Sigmoid colon (tissue), 7 donors: ENCODE measurements at regions of chr3 and their contacts with region 1.

Region 1: DNA sequence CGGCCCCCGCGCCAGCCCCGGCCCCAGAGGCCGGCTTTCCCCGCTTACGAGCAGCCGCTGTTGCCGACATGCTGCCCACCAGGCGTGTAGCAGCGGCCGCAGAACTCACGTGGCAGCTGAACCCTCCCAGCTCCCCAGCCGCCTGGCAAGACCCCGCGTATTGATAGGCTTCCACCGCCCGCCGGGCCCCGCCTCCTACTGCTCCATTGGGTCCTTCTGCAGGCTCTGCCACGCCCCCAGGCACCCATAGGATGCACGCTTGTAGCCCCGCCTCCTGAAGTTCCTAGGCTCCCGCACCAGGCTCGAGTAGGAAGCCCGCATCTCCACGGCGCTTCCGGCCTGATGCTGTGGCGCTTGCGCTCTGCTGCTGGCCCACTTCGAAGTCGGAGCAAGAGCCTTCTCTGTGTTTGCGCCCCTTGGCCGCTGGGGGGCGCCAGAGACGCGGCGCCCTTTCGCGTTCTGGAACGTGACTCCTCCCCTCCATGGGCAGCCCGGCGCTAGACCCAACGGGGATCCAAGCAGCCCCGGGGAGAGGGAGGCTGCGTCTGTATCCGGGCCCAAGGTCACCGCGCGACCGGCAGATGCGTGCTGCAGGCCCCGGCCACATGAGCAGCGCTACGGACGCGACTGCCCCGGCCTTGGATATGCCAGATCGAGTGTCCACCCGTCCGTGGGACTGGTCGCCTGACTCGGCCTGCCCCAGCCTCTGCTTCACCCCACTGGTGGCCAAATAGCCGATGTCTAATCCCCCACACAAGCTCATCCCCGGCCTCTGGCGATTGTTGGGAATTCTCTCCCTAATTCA is at the starts of genes PARP3 and RRP9:
- DNase-seq: peak; percentile 100
- H3K4me3 ChIP-seq: peak within 1 kb of the TSS; percentile 61 to 87 (median 75)
- H3K27ac ChIP-seq: peak within 1 kb of the TSS; percentile 89 to 97 (median 96)
- H3K4me1 ChIP-seq: peaks cover 0 to 37% (median 33%) of the 10 kb centered on the region in 4 donors
- H3K27me3 ChIP-seq: no peaks in the 10 kb centered on the region
- CTCF ChIP-seq: peak; percentile 97 to 100 (median 98)
- EP300 ChIP-seq: no peak
- POLR2A ChIP-seq: peak; percentile 63 to 68
- total RNA-seq, gene PARP3: 22.4 to 35.8 (median 26.7) TPM
- total RNA-seq, gene RRP9: 6.4 to 13.3 (median 12.4) TPM

Region 2: GRCh38 chr3:51967384-51968169 is 25.6 kb after region 1 on chr3 and contains the start of gene PCBP4:
- intact Hi-C with region 1: loop called (anchors 1 kb)
- DNase-seq: peak; percentile 85
- H3K4me3 ChIP-seq: peak within 1 kb of the TSS; percentile 66 to 95 (median 80)
- H3K27ac ChIP-seq: peak within 1 kb of the TSS; percentile 92 to 99 (median 94)
- H3K4me1 ChIP-seq: peaks cover 0 to 53% (median 43%) of the 10 kb centered on the region in 4 donors
- H3K27me3 ChIP-seq: no peaks in the 10 kb centered on the region
- CTCF ChIP-seq: no peak
- EP300 ChIP-seq: no peak
- POLR2A ChIP-seq: no peak
- total RNA-seq, gene PCBP4: 256 to 292 (median 268) TPM

Region 3: GRCh38 chr3:51995346-51996163 is 53.6 kb after region 1 on chr3 and contains the start of gene RPL29:
- intact Hi-C with region 1: loop called (anchors 1 kb)
- DNase-seq: peak; percentile 97
- H3K4me3 ChIP-seq: peak within 1 kb of the TSS; percentile 60 to 73 (median 64)
- H3K27ac ChIP-seq: peak within 1 kb of the TSS; percentile 82 to 85 (median 84)
- H3K4me1 ChIP-seq: peaks cover 0 to 19% (median 16%) of the 10 kb centered on the region in 4 donors
- H3K27me3 ChIP-seq: peaks cover 0 to 12% (median 0%) of the 10 kb centered on the region in 3 donors
- CTCF ChIP-seq: peak in 1 of 4 experiments; percentile 7
- EP300 ChIP-seq: peak in 1 of 4 donors; percentile 30
- POLR2A ChIP-seq: peak; percentile 48 to 61
- total RNA-seq, gene RPL29: 1,247 to 2,632 (median 2,024) TPM

Region 4: DNA sequence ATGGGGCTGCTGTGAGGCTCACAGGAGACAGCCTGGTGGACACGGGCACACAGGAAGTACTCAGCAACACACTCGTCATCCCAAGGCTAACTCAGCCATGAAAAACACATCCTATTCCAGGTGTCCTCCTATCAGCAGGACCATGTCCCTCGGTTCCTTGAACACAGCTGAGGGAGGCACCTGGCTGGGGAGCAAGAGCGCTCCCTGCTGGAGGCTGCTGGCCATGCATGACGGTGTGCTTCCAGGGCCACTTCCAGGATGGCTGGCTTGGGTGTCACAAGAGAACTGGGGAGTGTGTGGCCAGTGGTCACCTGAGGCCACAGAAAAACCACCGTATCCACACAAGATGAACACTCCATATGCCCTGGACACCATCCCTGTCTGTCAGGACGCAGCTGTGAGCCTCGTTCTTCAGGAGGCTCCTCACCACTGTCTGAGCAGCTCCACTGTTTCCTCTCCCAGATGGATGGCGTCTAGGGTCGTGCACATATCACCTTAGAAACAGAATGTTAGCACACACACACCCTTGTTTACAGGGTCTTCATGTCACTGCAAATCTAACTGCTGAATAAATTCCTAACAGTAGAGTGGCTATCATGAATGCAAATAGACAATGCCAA is 181.2 kb after region 1 on chr3:
- intact Hi-C with region 1: loop called (anchors 5 kb)
- DNase-seq: peak; percentile 84
- H3K4me3 ChIP-seq: no peak overlapping the region
- H3K27ac ChIP-seq: no peak overlapping the region
- H3K4me1 ChIP-seq: peaks cover 0 to 14% (median 5%) of the 10 kb centered on the region in 4 donors
- H3K27me3 ChIP-seq: no peaks in the 10 kb centered on the region
- CTCF ChIP-seq: peak; percentile 91 to 94 (median 93)
- EP300 ChIP-seq: no peak
- POLR2A ChIP-seq: no peak

Region 5: DNA sequence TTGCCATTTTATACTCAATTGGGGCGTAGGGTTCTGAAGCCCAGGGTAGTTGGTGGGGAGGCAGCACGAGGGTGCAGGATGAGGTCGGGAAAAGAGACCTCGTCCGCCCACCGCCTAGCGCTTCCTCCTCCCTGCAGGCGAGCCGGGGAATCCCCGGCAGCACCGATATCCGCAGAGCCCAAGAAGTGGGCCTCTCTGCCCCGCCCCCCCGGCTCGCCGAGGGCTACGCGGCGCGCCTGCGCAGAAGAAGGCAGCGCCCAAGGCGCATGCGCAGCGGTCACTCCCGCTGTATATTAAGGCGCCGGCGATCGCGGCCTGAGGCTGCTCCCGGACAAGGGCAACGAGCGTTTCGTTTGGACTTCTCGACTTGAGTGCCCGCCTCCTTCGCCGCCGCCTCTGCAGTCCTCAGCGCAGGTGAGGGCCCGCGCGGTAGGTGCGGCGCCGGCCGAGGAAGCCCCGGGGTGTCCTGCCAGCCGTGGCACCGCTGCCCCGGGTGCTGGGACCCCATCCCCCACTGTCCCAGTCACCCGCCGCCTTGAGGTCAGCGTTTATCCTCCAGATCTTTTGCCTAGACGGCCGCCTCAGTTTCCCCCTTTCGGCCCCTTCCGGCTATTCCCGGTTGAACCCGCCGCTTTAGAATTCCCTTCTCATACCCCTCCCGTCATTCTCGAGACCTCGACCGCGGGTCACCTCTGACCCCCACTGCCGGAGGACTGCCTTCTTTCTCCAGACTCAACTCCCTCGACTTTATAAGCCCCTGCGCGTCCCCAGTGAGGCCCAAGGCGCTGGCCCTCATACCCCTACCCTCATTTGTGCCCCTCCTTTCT is 256.1 kb after region 1 on chr3 and contains the start of gene ALAS1:
- intact Hi-C with region 1: loop called (anchors 5 kb)
- DNase-seq: peak; percentile 95
- H3K4me3 ChIP-seq: peak within 1 kb of the TSS; percentile 88 to 97 (median 91)
- H3K27ac ChIP-seq: peak within 1 kb of the TSS; percentile 86 to 90 (median 88)
- H3K4me1 ChIP-seq: peaks cover 0 to 65% (median 46%) of the 10 kb centered on the region in 4 donors
- H3K27me3 ChIP-seq: no peaks in the 10 kb centered on the region
- CTCF ChIP-seq: peak; percentile 29 to 54 (median 33)
- EP300 ChIP-seq: no peak
- POLR2A ChIP-seq: peak; percentile 58 to 88
- total RNA-seq, gene ALAS1: 23.2 to 27.3 (median 25.8) TPM